PC-9 (cell line): ENCODE measurements at regions of chr1 and their contacts with region 1.

Region 1: GRCh38 chr1:112196731-112197130 is 199.3 kb upstream of the CTTNBP2NL start:
- DNase-seq: peak in 1 of 2 experiments; percentile 16
- H3K4me3 ChIP-seq: no peak overlapping the region
- H3K27ac ChIP-seq: no peak overlapping the region
- H3K4me1 ChIP-seq: no peaks in the 10 kb centered on the region
- H3K27me3 ChIP-seq: peaks cover 18% of the 10 kb centered on the region
- CTCF ChIP-seq: no peak

Region 2: GRCh38 chr1:112358798-112359408 is 162.2 kb after region 1 on chr1:
- CTCF ChIA-PET with region 1: no interaction called
- POLR2A ChIA-PET with region 1: no interaction called
- intact Hi-C with region 1: no loop called
- DNase-seq: peak; percentile 18 to 33
- H3K4me3 ChIP-seq: no peak overlapping the region
- H3K27ac ChIP-seq: no peak overlapping the region
- H3K4me1 ChIP-seq: no peaks in the 10 kb centered on the region
- H3K27me3 ChIP-seq: peaks cover 80% of the 10 kb centered on the region
- CTCF ChIP-seq: peak; percentile 85

Region 3: DNA sequence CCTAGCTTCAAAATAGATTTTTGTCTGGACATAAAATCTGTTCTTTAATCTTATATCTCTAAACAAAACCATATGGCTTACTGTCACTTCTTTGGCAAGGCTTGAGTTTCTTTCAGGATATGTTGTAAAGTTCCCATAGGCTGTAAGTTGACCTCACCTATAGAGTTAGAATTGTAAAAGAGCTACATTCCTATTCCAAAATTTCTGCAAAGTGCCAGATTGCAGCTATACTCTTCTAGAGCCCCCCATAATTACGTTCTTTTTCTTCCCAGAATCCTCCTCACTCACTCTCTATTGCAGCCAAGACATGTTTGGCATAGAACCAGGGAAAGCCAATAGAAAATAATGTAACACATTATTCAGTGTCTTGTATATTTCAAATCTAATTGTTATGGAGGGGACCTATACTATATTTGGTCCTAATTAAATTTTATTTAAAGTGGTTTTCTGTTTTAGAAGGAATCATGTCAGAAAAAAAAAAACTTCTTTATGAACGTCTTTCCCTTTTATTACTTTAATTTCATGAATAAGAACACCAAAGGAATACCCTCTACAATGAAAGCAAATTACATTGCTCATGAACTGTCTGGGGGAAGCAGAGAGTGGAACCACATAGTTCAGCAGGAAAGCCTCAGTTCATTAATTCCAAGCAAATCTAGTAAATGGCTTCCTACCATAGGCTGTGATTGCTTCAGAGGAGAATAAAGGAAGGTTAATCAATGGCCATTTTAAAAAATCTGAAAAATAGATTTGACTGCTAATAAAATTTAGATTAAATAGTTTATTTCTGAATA is 221.6 kb after region 1 on chr1:
- CTCF ChIA-PET with region 1: no interaction called
- POLR2A ChIA-PET with region 1: interaction called, 11 read pairs
- intact Hi-C with region 1: no loop called
- DNase-seq: no peak
- H3K4me3 ChIP-seq: no peak overlapping the region
- H3K27ac ChIP-seq: no peak overlapping the region
- H3K4me1 ChIP-seq: no peaks in the 10 kb centered on the region
- H3K27me3 ChIP-seq: no peaks in the 10 kb centered on the region
- CTCF ChIP-seq: no peak

Region 4: DNA sequence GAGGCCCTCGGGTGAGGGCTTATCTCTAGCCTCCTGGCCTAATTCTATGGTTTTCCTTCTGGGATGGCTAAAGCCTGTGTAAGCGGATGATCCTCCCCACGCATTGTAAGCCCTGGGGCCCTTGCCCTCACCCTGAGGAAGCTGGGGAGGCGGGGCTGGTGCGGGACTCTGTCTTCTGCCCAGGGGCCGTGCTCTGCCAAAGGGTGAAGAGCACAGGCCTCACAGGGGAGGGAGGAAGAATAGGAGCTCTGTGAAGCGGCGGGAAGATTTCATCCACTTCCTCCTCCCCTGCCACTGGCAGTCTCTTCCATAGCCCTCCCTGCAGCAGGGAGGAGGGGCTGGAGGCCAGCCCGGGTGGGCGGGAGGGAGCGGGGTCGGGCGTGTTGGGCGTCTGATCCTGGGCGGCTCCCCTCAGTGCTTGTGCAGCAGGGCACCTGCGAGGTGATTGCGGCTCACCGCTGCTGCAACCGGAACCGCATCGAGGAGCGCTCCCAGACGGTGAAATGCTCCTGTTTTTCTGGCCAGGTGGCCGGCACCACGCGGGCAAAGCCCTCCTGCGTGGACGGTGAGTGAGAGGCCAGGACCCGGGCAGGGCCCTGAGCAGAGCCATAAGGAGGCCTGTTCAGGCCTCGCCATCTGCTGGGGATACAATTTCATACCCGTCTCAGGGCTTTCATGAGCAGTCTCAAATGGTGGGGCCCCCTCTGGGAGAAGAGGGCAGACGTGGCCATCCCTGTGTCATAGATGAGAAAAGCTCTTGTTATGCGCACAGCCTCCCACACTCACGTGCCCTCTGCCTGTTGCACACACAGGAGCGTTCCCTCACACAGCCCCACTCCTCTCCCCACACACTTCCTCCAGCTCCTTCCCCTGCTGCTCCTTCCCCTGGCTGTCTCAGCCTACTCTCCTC is 526.1 kb after region 1 on chr1:
- CTCF ChIA-PET with region 1: no interaction called
- POLR2A ChIA-PET with region 1: no interaction called
- intact Hi-C with region 1: no loop called
- DNase-seq: peak in 1 of 2 experiments; percentile 24
- H3K4me3 ChIP-seq: no peak overlapping the region
- H3K27ac ChIP-seq: no peak overlapping the region
- H3K4me1 ChIP-seq: no peaks in the 10 kb centered on the region
- H3K27me3 ChIP-seq: no peaks in the 10 kb centered on the region
- CTCF ChIP-seq: no peak